ENCODE measurements at regions of chr3 and their contacts with region 1.

Region 1: GRCh38 chr3:187902041-187902471 is 156.8 kb upstream of the BCL6 start:
- DNase-seq: no peak
- H3K4me3 ChIP-seq: no peak overlapping the region
- H3K27ac ChIP-seq: no peak overlapping the region
- H3K4me1 ChIP-seq: peaks cover 0 to 6% of the 10 kb centered on the region in 2 donors
- H3K27me3 ChIP-seq: no peaks in the 10 kb centered on the region
- CTCF ChIP-seq: no peak
- POLR2A ChIP-seq: no peak

Region 2: DNA sequence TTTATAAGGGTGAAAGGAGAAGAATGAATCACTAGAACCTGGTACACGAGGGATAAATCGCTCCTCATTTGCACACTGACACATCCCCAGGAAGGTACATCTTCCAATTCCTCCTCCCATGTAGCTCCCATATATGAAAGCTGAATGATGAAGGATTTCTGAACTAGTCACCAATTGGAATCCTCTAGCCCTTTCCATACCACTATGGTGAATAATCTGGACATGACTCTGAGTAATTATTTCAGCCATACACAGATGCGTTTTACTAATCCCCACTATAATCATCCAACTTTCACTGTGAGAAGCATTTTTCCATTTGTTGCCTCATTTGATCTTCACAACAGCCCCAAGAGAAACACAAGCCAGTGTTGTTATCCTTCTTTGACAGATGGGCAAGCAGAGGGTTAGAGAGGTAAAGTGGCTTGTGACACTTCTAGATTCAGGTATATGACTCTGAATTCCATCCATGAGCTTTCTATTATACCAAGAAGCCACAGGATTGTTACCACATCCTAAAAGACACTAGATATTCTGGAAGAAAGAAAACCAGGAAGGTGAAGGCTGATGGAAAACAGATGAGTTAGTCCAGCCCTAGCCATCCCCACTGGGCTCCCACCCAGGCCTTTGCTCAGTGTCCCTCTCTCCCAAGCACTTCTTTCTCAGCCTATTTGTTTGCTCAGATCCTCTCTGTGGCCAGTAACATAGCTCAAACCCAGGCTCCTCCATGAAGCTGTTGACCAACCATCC is 134.6 kb before region 1 on chr3:
- intact Hi-C with region 1: loop called in 1 of 2 experiments (anchors 10 kb)
- DNase-seq: no peak
- H3K4me3 ChIP-seq: no peak overlapping the region
- H3K27ac ChIP-seq: no peak overlapping the region
- H3K4me1 ChIP-seq: no peaks in the 10 kb centered on the region
- H3K27me3 ChIP-seq: no peaks in the 10 kb centered on the region
- CTCF ChIP-seq: no peak
- POLR2A ChIP-seq: no peak

Region 3: GRCh38 chr3:187994221-187995042 is 92.4 kb after region 1 on chr3:
- intact Hi-C with region 1: no loop called
- DNase-seq: no peak
- H3K4me3 ChIP-seq: no peak overlapping the region
- H3K27ac ChIP-seq: no peak overlapping the region
- H3K4me1 ChIP-seq: no peaks in the 10 kb centered on the region
- H3K27me3 ChIP-seq: no peaks in the 10 kb centered on the region
- CTCF ChIP-seq: no peak
- POLR2A ChIP-seq: no peak

Measured in adrenal gland (tissue), 19 donors.